CD4-positive, alpha-beta T cell (primary cell): ENCODE measurements at regions of chr7 and their contacts with region 1.

Region 1: GRCh38 chr7:5694912-5695726 is 86.3 kb downstream of the RNF216 start:
- DNase-seq: peak; percentile 57 to 88 (median 69)
- ATAC-seq: peak; percentile 74
- H3K4me3 ChIP-seq: peak overlapping the region; percentile 54
- H3K4me3 Mint-ChIP-seq: peak overlapping the region; percentile 96
- H3K27ac ChIP-seq: peak overlapping the region; percentile 67 to 71
- H3K27ac Mint-ChIP-seq: peak overlapping the region; percentile 90
- H3K4me1 ChIP-seq: peaks cover 93% of the 10 kb centered on the region
- H3K4me1 Mint-ChIP-seq: peaks cover 100% of the 10 kb centered on the region
- H3K27me3 ChIP-seq: no peaks in the 10 kb centered on the region
- H3K27me3 Mint-ChIP-seq: no peaks in the 10 kb centered on the region
- CTCF ChIP-seq: no peak

Region 2: DNA sequence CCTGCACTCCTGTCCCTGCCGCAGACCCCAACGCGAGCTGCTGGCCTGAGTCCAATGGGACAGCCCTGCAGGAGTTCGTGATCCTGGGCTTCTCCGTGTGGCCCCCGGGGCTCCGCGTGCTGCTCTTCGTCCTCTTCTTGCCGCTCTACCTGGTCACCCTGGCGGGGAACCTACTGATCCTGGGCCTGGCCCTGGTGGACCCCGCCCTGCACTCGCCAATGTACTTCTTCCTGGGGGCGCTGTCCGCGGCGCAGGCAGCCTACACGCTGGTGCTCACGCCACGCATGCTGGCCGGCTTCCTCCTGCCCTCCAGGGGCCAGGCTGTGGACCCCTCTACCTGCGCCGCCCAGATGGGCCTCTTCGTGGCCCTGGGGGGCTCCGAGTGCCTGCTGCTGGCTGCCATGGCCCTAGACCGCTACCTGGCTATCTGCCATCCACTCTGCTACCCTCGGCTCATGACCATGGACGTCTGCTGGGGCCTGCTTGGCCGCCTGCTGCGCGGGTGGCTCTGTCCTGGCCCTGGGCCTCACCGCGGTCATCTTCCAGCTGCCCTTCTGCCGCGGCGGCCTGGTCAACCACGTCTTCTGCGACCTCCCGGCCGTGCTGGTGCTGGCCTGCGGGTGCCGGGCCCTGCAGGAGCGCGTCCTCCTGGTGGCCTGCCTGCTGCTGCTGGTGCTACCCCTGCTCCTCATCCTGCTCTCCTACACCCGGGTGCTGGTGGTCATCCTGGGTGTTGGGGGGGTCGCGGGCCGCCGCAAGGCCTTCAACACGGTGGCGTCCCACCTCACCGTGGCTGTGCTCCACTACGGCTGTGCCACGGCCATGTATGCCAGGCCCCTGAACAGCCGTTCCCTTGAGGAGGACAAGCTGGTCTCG is 577.8 kb before region 1 on chr7:
- CTCF ChIA-PET with region 1: no interaction called
- POLR2A ChIA-PET with region 1: no interaction called
- intact Hi-C with region 1: no loop called
- DNase-seq: no peak
- ATAC-seq: no peak
- H3K4me3 ChIP-seq: no peak overlapping the region
- H3K4me3 Mint-ChIP-seq: no peak overlapping the region
- H3K27ac ChIP-seq: no peak overlapping the region
- H3K27ac Mint-ChIP-seq: no peak overlapping the region
- H3K4me1 ChIP-seq: peaks cover 3% of the 10 kb centered on the region
- H3K4me1 Mint-ChIP-seq: peaks cover 4% of the 10 kb centered on the region
- H3K27me3 ChIP-seq: peaks cover 0 to 3% of the 10 kb centered on the region in 2 experiments
- H3K27me3 Mint-ChIP-seq: peaks cover 5% of the 10 kb centered on the region
- CTCF ChIP-seq: no peak

Region 3: GRCh38 chr7:5526100-5526905 is 168.8 kb before region 1 on chr7:
- CTCF ChIA-PET with region 1: no interaction called
- POLR2A ChIA-PET with region 1: interaction called, 14 read pairs
- intact Hi-C with region 1: no loop called
- DNase-seq: peak in 10 of 14 experiments; percentile 10 to 56 (median 26)
- ATAC-seq: no peak
- H3K4me3 ChIP-seq: peak overlapping the region; percentile 72
- H3K4me3 Mint-ChIP-seq: peak overlapping the region; percentile 97
- H3K27ac ChIP-seq: peak overlapping the region; percentile 27 to 48
- H3K27ac Mint-ChIP-seq: peak overlapping the region; percentile 95
- H3K4me1 ChIP-seq: peaks cover 37% of the 10 kb centered on the region
- H3K4me1 Mint-ChIP-seq: peaks cover 41% of the 10 kb centered on the region
- H3K27me3 ChIP-seq: no peaks in the 10 kb centered on the region
- H3K27me3 Mint-ChIP-seq: peaks cover 4% of the 10 kb centered on the region
- CTCF ChIP-seq: no peak

Region 4: GRCh38 chr7:5677538-5678294 is 17.4 kb before region 1 on chr7:
- CTCF ChIA-PET with region 1: interaction called, 26 read pairs
- POLR2A ChIA-PET with region 1: interaction called, 18 read pairs
- intact Hi-C with region 1: no loop called
- DNase-seq: peak in 11 of 14 experiments; percentile 16 to 73 (median 44)
- ATAC-seq: peak; percentile 52
- H3K4me3 ChIP-seq: no peak overlapping the region
- H3K4me3 Mint-ChIP-seq: no peak overlapping the region
- H3K27ac ChIP-seq: no peak overlapping the region
- H3K27ac Mint-ChIP-seq: peak overlapping the region; percentile 60
- H3K4me1 ChIP-seq: peaks cover 45% of the 10 kb centered on the region
- H3K4me1 Mint-ChIP-seq: peaks cover 59% of the 10 kb centered on the region
- H3K27me3 ChIP-seq: no peaks in the 10 kb centered on the region
- H3K27me3 Mint-ChIP-seq: no peaks in the 10 kb centered on the region
- CTCF ChIP-seq: peak; percentile 49

Region 5: DNA sequence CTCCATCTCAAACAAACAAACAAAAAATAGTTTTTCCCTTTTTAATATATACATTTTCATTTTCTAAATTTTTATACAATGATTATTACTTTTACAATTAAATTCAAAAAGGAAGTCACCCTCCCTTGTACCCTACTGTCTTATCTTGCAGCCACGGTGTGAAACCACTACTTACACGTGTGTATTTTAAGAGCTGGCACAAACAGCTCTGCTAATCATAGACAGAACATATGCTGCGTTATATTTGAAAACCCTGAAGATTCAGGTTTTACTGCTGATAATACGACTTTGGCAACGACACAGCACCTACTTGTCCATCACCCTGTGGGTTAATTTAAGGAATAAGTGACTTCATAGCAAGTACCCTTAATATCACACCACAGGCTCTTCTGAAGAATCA is 337.0 kb after region 1 on chr7:
- CTCF ChIA-PET with region 1: no interaction called
- POLR2A ChIA-PET with region 1: no interaction called
- intact Hi-C with region 1: no loop called
- DNase-seq: peak in 1 of 14 experiments; percentile 49
- ATAC-seq: no peak
- H3K4me3 ChIP-seq: no peak overlapping the region
- H3K4me3 Mint-ChIP-seq: no peak overlapping the region
- H3K27ac ChIP-seq: no peak overlapping the region
- H3K27ac Mint-ChIP-seq: no peak overlapping the region
- H3K4me1 ChIP-seq: peaks cover 4% of the 10 kb centered on the region
- H3K4me1 Mint-ChIP-seq: peaks cover 10% of the 10 kb centered on the region
- H3K27me3 ChIP-seq: no peaks in the 10 kb centered on the region
- H3K27me3 Mint-ChIP-seq: no peaks in the 10 kb centered on the region
- CTCF ChIP-seq: no peak

Region 6: GRCh38 chr7:6375348-6376101 is 680.4 kb after region 1 on chr7:
- CTCF ChIA-PET with region 1: no interaction called
- POLR2A ChIA-PET with region 1: no interaction called
- intact Hi-C with region 1: no loop called
- DNase-seq: peak in 8 of 14 experiments; percentile 10 to 61 (median 24)
- ATAC-seq: peak; percentile 31
- H3K4me3 ChIP-seq: peak overlapping the region; percentile 71
- H3K4me3 Mint-ChIP-seq: peak overlapping the region; percentile 96
- H3K27ac ChIP-seq: peak overlapping the region; percentile 69 to 70
- H3K27ac Mint-ChIP-seq: peak overlapping the region; percentile 96
- H3K4me1 ChIP-seq: peaks cover 50% of the 10 kb centered on the region
- H3K4me1 Mint-ChIP-seq: peaks cover 44% of the 10 kb centered on the region
- H3K27me3 ChIP-seq: no peaks in the 10 kb centered on the region
- H3K27me3 Mint-ChIP-seq: no peaks in the 10 kb centered on the region
- CTCF ChIP-seq: no peak